T-cell (primary cell): ENCODE measurements at regions of chr6 and their contacts with region 1.

Region 1: DNA sequence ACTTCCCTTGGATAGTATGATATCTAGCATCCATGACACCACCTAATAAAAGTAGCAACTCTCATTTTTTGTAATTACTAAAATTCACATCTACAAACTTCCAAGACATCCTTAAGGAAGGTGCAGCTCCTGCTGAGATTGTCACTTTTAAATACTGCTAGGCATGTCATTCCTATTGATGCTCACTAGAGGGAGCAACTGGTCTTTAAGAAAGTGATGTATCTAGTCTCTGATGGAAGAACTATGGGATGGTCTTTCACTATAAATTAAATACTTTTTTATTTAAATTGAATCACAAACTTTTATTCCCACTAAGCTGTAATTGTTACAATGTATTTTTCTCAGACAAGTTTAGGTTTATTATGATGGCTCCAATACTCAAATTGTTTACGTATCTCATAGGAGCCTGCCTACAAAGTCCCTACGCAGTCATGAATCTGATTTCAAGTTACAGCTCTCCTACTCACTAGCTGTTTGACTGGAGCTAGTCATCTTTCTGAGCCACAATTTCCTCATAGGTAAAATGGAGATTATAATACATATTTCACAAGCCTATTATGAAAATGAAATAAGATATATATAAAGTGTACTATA is 8.1 kb upstream of the TSPYL1 start:
- DNase-seq: peak in 1 of 35 experiments; percentile 69
- ATAC-seq: peak; percentile 68 to 78 (median 72)
- H3K4me3 ChIP-seq: no peak overlapping the region
- H3K4me3 Mint-ChIP-seq: no peak overlapping the region
- H3K27ac ChIP-seq: no peak overlapping the region
- H3K27ac Mint-ChIP-seq: no peak overlapping the region
- H3K4me1 ChIP-seq: no peaks in the 10 kb centered on the region
- H3K4me1 Mint-ChIP-seq: peaks cover 0 to 3% (median 1%) of the 10 kb centered on the region in 3 donors
- H3K27me3 ChIP-seq: no peaks in the 10 kb centered on the region
- H3K27me3 Mint-ChIP-seq: no peaks in the 10 kb centered on the region

Region 2: GRCh38 chr6:115945306-115945705 is 342.5 kb before region 1 on chr6:
- CTCF ChIA-PET with region 1: no interaction called
- POLR2A ChIA-PET with region 1: no interaction called
- DNase-seq: no peak
- ATAC-seq: no peak
- H3K4me3 ChIP-seq: no peak overlapping the region
- H3K4me3 Mint-ChIP-seq: no peak overlapping the region
- H3K27ac ChIP-seq: no peak overlapping the region
- H3K27ac Mint-ChIP-seq: no peak overlapping the region
- H3K4me1 ChIP-seq: no peaks in the 10 kb centered on the region
- H3K4me1 Mint-ChIP-seq: no peaks in the 10 kb centered on the region
- H3K27me3 ChIP-seq: no peaks in the 10 kb centered on the region
- H3K27me3 Mint-ChIP-seq: no peaks in the 10 kb centered on the region

Region 3: GRCh38 chr6:116561377-116562018 is 273.7 kb after region 1 on chr6:
- CTCF ChIA-PET with region 1: interaction called, 6 to 10 read pairs
- POLR2A ChIA-PET with region 1: no interaction called
- DNase-seq: peak in 34 of 35 experiments; percentile 20 to 81 (median 52)
- ATAC-seq: peak; percentile 65 to 76 (median 73)
- H3K4me3 ChIP-seq: no peak overlapping the region
- H3K4me3 Mint-ChIP-seq: no peak overlapping the region
- H3K27ac ChIP-seq: no peak overlapping the region
- H3K27ac Mint-ChIP-seq: no peak overlapping the region
- H3K4me1 ChIP-seq: peaks cover 0 to 9% of the 10 kb centered on the region in 2 experiments
- H3K4me1 Mint-ChIP-seq: peaks cover 7 to 17% (median 8%) of the 10 kb centered on the region in 3 donors
- H3K27me3 ChIP-seq: peaks cover 0 to 19% of the 10 kb centered on the region in 2 experiments
- H3K27me3 Mint-ChIP-seq: peaks cover 22 to 25% of the 10 kb centered on the region in 2 donors